ENCODE measurements at regions of chr19 and their contacts with region 1.

Region 1: DNA sequence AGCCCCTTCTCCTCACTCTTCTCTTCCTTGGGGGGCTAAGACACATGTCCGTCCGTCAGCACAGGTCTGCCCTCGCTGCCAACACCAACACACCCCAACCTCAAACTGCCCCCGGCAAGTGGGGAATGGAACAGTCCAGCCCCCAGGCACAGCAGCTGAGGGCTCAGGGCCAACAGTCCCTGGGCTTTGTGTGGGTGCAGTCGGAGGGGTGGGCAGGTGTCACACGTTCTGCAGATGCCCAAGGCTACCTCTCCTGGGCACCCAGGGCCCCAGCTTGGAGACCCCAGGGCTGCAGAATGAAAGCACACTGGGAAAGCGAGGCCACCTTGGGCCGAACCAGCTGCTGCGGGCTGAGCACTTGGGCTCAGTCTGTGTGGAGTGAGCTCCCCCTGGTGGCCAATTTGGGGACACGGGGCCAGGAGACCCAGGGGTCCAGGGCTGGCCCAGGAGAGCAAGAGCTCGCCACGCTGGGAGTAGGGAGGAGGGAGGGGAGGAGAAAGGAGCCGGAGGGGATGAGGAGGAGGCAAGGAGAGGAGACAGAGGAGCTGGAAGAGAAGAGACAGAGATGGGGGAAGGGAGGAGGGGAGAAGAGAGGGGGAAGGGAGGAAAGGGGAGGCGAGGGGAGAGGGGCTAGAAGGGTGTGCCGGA is 14.0 kb upstream of the ATP8B3 start:
- DNase-seq: peak; percentile 82
- H3K4me3 Mint-ChIP-seq: no peak overlapping the region
- H3K27ac Mint-ChIP-seq: no peak overlapping the region
- H3K4me1 Mint-ChIP-seq: peaks cover 4% of the 10 kb centered on the region
- H3K27me3 Mint-ChIP-seq: no peaks in the 10 kb centered on the region

Region 2: GRCh38 chr19:1813197-1814182 is 12.5 kb before region 1 on chr19:
- CTCF ChIA-PET with region 1: interaction called, 17 read pairs
- POLR2A ChIA-PET with region 1: no interaction called
- DNase-seq: no peak
- H3K4me3 Mint-ChIP-seq: peak overlapping the region; percentile 89
- H3K27ac Mint-ChIP-seq: peak overlapping the region; percentile 100
- H3K4me1 Mint-ChIP-seq: peaks cover 22% of the 10 kb centered on the region
- H3K27me3 Mint-ChIP-seq: no peaks in the 10 kb centered on the region

Region 3: DNA sequence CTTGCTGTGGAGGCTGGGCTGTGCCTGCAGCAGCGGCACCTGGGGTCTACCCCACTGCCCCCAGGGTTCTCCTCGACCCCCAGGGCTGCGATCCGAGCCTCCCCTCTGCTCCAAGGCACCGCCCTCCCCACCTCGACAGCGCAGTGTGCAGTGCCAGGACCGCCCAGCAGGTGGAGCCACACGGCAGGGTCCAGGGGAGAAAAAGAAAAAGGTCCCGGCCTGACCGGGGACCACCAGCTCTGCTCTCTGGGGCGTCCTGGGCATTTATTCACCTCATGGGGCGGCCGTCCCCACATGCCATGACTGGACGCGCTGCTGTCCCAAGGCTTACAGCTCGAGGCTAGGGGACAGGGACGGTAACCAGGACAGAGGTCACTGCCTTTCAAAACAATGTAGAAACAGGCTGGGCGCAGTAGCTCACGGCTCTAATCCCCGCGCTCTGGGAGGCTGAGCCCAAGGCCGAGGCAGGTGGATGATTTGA is 11.6 kb after region 1 on chr19:
- CTCF ChIA-PET with region 1: interaction called, 31 read pairs
- POLR2A ChIA-PET with region 1: no interaction called
- DNase-seq: peak; percentile 62
- H3K4me3 Mint-ChIP-seq: no peak overlapping the region
- H3K27ac Mint-ChIP-seq: no peak overlapping the region
- H3K4me1 Mint-ChIP-seq: peaks cover 19% of the 10 kb centered on the region
- H3K27me3 Mint-ChIP-seq: no peaks in the 10 kb centered on the region

Measured in activated CD4-positive, alpha-beta T cell treated with anti-CD3 and anti-CD28 coated beads, Interleukin-2, amount 10 ng/mL, durations not matched to agents 7 days and 5 days (primary cell).